Lower leg skin (tissue), 4 donors: ENCODE measurements at regions of chr14 and their contacts with region 1.

Region 1: GRCh38 chr14:63276492-63277342 is 42.0 kb downstream of the GPHB5 start:
- DNase-seq: no peak
- H3K4me3 ChIP-seq: no peak overlapping the region
- CTCF ChIP-seq: peak in 1 of 3 donors; percentile 70
- POLR2A ChIP-seq: no peak

Region 2: GRCh38 chr14:62179367-62180018 is 1097.2 kb before region 1 on chr14:
- intact Hi-C with region 1: loop called (anchors 10 kb)
- DNase-seq: peak in 1 of 2 donors; percentile 60
- H3K4me3 ChIP-seq: no peak overlapping the region
- CTCF ChIP-seq: no peak
- POLR2A ChIP-seq: no peak

Region 3: DNA sequence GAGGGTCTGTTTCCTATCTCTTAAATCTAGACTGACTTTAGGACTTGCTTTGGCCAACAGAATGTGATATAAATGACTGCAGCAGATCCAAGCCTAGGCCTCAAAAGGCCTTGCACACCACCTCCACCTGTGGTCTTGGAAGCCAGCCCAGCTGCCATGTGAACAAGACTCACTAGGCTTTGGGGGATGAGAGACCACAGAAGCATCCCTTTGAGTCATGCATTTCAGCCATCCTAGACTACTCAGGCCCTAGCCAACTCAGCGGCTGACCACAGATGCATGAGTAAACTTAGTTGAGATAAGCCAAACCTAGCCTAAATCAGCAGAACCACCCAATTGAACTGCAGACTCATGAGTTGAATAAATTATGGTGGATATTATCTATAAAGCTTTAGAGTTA is 319.2 kb before region 1 on chr14:
- intact Hi-C with region 1: no loop called
- DNase-seq: no peak
- H3K4me3 ChIP-seq: no peak overlapping the region
- CTCF ChIP-seq: no peak
- POLR2A ChIP-seq: no peak

Region 4: GRCh38 chr14:63229330-63230059 is 47.2 kb before region 1 on chr14:
- intact Hi-C with region 1: no loop called
- DNase-seq: no peak
- H3K4me3 ChIP-seq: no peak overlapping the region
- CTCF ChIP-seq: no peak
- POLR2A ChIP-seq: no peak